ENCODE measurements at regions of chr5 and their contacts with region 1.

Region 1: DNA sequence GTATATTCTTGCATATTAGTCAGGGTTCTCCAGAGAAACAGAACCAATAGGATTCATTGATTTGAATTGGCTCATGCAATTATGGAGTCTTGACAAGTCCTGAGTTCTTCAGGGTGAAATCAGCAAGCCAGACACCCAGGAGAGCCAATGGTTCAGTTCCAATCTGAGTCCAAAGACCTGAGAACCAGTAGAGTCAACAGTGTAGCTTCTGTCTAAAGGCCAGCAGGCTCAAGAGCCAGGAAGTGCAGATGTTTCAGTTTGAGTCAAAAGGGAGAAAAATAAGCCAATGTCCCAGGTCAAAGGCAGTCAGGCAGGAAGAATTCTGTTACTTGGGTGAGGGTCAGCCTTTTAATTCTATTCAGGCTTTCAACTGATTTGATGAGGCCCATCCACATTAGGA is 37.8 kb upstream of the ANKRD34B start:
- DNase-seq: no peak
- H3K4me3 ChIP-seq: no peak overlapping the region
- H3K27ac ChIP-seq: no peak overlapping the region
- H3K4me1 ChIP-seq: no peaks in the 10 kb centered on the region
- H3K27me3 ChIP-seq: no peaks in the 10 kb centered on the region
- CTCF ChIP-seq: no peak

Region 2: GRCh38 chr5:80620211-80620610 is 12.4 kb after region 1 on chr5:
- CTCF ChIA-PET with region 1: no interaction called
- POLR2A ChIA-PET with region 1: no interaction called
- intact Hi-C with region 1: loop called (anchors 2 kb)
- DNase-seq: no peak
- H3K4me3 ChIP-seq: no peak overlapping the region
- H3K27ac ChIP-seq: no peak overlapping the region
- H3K4me1 ChIP-seq: no peaks in the 10 kb centered on the region
- H3K27me3 ChIP-seq: no peaks in the 10 kb centered on the region
- CTCF ChIP-seq: no peak

Region 3: GRCh38 chr5:80629281-80629680 is 21.4 kb after region 1 on chr5:
- CTCF ChIA-PET with region 1: no interaction called
- POLR2A ChIA-PET with region 1: interaction called, 10 read pairs
- intact Hi-C with region 1: no loop called
- DNase-seq: no peak
- H3K4me3 ChIP-seq: no peak overlapping the region
- H3K27ac ChIP-seq: no peak overlapping the region
- H3K4me1 ChIP-seq: no peaks in the 10 kb centered on the region
- H3K27me3 ChIP-seq: no peaks in the 10 kb centered on the region
- CTCF ChIP-seq: no peak

Region 4: GRCh38 chr5:80707645-80708044 is 99.8 kb after region 1 on chr5:
- CTCF ChIA-PET with region 1: no interaction called
- POLR2A ChIA-PET with region 1: no interaction called
- intact Hi-C with region 1: no loop called
- DNase-seq: no peak
- H3K4me3 ChIP-seq: no peak overlapping the region
- H3K27ac ChIP-seq: no peak overlapping the region
- H3K4me1 ChIP-seq: no peaks in the 10 kb centered on the region
- H3K27me3 ChIP-seq: no peaks in the 10 kb centered on the region
- CTCF ChIP-seq: no peak

Measured in PC-9 (cell line).